Right ventricle myocardium inferior (tissue), 1 donor: ENCODE measurements at regions of chr2 and their contacts with region 1.

Region 1: DNA sequence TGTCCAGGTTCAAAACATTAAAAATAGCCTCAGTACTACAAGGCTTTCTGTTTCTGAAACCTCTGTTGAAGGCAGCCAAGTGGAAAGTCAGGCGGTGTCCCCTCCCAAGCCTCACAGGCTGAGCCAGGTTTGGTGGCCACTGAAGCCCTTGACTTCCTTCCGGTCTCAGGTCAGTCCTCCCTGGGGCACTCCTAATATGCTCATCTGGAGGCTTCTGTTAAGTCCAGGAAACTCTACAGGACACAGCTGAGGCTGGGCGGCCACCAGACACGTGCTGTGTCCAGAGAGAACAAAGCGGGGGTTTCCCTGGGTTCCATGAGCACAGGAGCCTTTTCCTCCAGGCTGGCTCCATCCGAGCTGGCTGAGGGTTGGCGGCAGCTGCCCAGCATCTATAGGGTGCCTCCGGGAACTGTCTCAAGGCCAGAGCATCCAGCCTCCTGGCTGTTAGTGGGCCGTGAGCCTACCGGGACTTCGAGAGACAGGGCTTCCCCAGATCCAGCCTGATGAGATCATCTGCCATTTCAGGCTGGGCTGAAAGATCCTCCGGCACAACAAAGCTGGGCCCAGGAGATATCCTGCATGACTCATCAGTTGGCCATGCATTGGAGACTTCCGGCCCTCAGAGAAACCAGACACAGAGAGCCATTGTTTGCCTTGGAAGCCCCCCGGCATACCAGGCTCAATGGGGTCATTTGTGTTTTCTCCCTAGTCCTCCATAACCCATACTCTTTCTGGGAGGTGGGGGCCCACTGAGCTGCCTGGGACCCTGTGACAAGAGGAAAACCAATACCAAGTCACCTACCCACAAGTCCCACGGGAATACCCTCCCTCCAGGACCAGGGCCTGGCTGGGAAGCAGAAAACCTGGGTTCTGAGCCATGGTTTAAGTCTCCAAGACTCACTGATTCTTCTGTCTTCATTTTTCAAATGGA is 71.7 kb downstream of the HS1BP3 start:
- DNase-seq: peak; percentile 89
- ATAC-seq: peak; percentile 90

Region 2: GRCh38 chr2:20450204-20450999 is 128.8 kb before region 1 on chr2:
- intact Hi-C with region 1: loop called (anchors 5 kb)
- DNase-seq: no peak
- ATAC-seq: peak; percentile 39

Region 3: DNA sequence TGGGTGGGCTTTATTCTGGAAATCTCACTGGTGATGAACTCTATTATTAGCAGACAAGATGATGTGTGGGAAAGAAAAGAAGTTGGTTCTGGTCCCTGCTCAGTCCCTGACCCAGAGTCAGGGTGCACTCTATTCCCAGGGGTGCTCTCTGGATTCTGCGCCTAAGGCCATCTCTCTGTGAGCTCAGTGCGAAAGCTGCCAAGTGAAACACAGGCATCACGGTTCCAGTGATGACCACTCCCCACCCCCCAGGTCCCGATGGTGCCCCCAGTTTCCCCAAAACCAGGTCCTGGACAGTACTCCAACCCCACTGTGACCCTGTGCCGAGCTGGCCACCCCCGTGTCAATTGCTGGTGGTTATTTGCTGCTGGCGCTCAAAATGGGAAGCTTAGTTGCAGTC is 102.2 kb before region 1 on chr2:
- intact Hi-C with region 1: loop called (anchors 1 kb)
- DNase-seq: no peak
- ATAC-seq: peak; percentile 32

Region 4: GRCh38 chr2:20507166-20507692 is 71.9 kb before region 1 on chr2:
- intact Hi-C with region 1: no loop called
- DNase-seq: no peak
- ATAC-seq: no peak

Region 5: GRCh38 chr2:20868377-20868776 is 289.2 kb after region 1 on chr2:
- intact Hi-C with region 1: no loop called
- DNase-seq: no peak
- ATAC-seq: no peak